ENCODE measurements at regions of chr17 and their contacts with region 1.

Region 1: GRCh38 chr17:45098869-45099616 is 33.3 kb downstream of the PLCD3 start:
- DNase-seq: peak; percentile 82 to 93 (median 84)
- ATAC-seq: peak; percentile 55 to 83 (median 75)
- H3K4me3 ChIP-seq: no peak overlapping the region
- H3K27ac ChIP-seq: peak overlapping the region in 5 of 12 donors; percentile 29 to 72 (median 42)
- H3K4me1 ChIP-seq: peaks cover 0 to 48% (median 19%) of the 10 kb centered on the region in 12 donors
- H3K27me3 ChIP-seq: no peaks in the 10 kb centered on the region
- CTCF ChIP-seq: peak; percentile 85 to 96 (median 90)
- POLR2A ChIP-seq: no peak

Region 2: GRCh38 chr17:44775136-44775837 is 323.8 kb before region 1 on chr17:
- intact Hi-C with region 1: loop called in 1 of 10 experiments (anchors 10 kb)
- DNase-seq: peak in 4 of 5 donors; percentile 96 to 98 (median 96)
- ATAC-seq: peak; percentile 93 to 94 (median 94)
- H3K4me3 ChIP-seq: peak overlapping the region; percentile 31 to 74 (median 63)
- H3K27ac ChIP-seq: peak overlapping the region in 6 of 12 donors; percentile 7 to 82 (median 36)
- H3K4me1 ChIP-seq: peaks cover 0 to 30% (median 21%) of the 10 kb centered on the region in 12 donors
- H3K27me3 ChIP-seq: no peaks in the 10 kb centered on the region
- CTCF ChIP-seq: peak in 3 of 12 donors; percentile 3 to 38 (median 7)
- POLR2A ChIP-seq: no peak

Region 3: DNA sequence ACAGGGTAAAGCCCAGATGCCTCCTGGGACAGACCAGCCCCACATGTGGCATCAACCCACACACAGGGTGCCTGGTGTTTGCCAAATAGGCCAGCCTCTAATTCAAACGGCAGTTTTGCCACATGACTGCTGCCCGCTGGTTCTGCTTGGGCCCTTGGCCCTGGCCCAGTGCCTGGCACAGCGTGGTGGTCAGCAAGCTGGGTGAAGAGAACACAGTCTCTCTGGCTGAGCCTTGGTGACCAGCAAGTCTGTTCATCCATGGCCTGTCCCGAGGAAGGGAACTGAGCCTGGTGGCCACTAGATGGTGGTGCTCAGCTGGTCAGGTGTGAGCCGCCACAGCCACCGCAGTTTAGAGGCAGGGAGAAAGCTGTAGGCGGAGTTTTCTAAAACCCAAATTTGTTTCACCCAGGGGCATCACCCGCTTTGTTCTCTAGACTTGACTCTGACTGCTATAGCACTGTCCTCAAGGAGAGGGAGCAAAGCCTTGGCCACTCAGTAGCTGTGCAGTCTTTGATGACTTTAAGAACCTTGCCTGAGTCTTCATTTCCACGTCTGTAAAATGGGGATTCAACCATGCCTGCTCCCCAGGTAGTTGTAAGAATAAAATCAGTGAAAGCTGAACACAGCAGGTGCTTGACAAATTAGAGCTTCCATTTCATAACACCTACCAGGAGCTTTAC is 179.0 kb before region 1 on chr17:
- intact Hi-C with region 1: loop called in 9 of 10 experiments (anchors 2 to 10 kb)
- DNase-seq: peak; percentile 79 to 88 (median 84)
- ATAC-seq: peak; percentile 69 to 85 (median 84)
- H3K4me3 ChIP-seq: no peak overlapping the region
- H3K27ac ChIP-seq: peak overlapping the region in 5 of 12 donors; percentile 17 to 74 (median 70)
- H3K4me1 ChIP-seq: peaks cover 0 to 38% (median 16%) of the 10 kb centered on the region in 12 donors
- H3K27me3 ChIP-seq: peaks cover 0 to 4% (median 0%) of the 10 kb centered on the region in 9 donors
- CTCF ChIP-seq: peak; percentile 70 to 90 (median 84)
- POLR2A ChIP-seq: no peak

Region 4: DNA sequence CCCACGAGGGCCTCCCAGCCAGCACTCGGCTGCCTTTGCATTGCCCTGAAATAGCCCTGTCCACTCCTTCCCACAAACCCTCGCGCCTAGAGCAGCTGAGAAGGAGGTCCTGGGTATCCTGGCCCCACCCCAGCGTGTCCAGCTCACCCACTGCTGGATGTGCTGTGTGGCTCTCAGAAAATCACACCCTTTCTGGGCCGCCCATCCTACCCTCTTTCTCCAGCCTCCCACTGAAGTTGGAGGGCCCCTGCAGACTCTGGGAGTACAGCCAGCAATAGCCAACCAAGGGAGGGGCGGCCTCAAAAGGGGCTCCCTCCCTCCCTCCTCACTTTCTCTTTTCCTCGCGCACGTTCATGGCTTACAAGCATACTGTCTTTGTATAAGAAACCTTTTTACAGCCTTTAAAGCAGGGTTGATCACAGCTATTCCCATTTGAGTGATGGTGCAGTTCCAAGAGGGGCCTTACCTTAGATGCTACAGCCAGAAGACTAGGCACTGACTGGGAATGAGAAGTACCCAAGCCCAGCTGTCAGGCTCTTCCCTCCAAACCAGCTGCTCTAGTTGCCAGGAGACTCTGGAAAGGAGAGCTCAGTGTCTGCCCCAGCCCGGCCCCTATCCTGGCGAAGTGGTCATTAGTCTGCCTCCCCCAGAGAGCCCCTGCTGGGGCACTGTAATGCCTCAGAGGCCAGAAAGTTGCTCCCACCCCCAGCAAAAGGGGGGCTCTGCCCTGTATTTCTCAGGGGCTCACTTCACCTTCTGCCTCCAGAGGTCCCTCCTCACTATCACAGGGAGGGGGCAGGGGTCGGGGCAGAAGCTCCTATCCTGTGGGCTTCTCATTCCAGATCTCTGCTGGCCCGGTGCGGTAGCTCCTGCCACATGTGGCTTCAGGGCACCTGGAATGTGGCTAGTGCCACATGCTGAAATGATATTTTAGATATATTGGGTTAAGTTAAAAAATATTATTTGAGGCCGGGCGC is 85.7 kb before region 1 on chr17:
- intact Hi-C with region 1: no loop called
- DNase-seq: peak in 2 of 5 donors; percentile 44 to 56
- ATAC-seq: peak; percentile 15 to 78 (median 64)
- H3K4me3 ChIP-seq: peak overlapping the region in 2 of 12 donors; percentile 3 to 19
- H3K27ac ChIP-seq: no peak overlapping the region
- H3K4me1 ChIP-seq: peaks cover 0 to 17% (median 9%) of the 10 kb centered on the region in 12 donors
- H3K27me3 ChIP-seq: peaks cover 0 to 3% (median 0%) of the 10 kb centered on the region in 9 donors
- CTCF ChIP-seq: no peak
- POLR2A ChIP-seq: no peak

Region 5: DNA sequence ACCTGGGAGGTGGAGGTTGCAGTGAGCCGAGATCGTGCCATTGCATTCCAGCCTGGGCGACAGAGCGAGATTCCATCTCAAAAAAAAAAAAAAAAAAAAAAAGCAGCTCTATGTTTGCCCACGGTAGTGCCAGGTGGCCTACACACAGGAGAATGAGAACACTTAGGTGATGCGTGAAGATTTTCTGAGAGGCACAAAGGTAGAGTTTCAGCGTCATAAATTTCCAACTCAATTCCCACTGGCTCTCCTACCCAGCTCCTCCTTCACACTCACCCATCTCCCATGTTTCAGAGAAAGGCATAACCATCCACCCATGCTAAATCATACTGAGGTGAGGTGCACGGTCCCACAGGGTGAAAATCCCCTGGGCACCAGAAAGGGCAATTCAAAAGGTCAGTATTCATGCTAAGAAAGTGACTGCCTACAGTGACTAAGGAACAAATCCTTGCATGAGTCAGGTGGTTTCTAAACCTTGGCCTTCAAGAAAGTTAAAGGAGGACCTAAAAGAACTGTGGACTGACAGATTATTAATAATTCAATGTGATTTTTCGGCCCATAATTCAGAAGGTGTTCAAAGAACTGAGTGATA is 52.4 kb before region 1 on chr17:
- intact Hi-C with region 1: no loop called
- DNase-seq: no peak
- ATAC-seq: no peak
- H3K4me3 ChIP-seq: no peak overlapping the region
- H3K27ac ChIP-seq: no peak overlapping the region
- H3K4me1 ChIP-seq: peaks cover 0 to 50% (median 22%) of the 10 kb centered on the region in 12 donors
- H3K27me3 ChIP-seq: no peaks in the 10 kb centered on the region
- CTCF ChIP-seq: no peak
- POLR2A ChIP-seq: no peak

Region 6: GRCh38 chr17:45060797-45061605 is 38.0 kb before region 1 on chr17 and contains the start of gene NMT1:
- intact Hi-C with region 1: loop called in 2 of 10 experiments (anchors 5 kb)
- DNase-seq: peak; percentile 97 to 99 (median 98)
- ATAC-seq: peak; percentile 98
- H3K4me3 ChIP-seq: peak within 1 kb of the TSS; percentile 41 to 94 (median 78)
- H3K27ac ChIP-seq: peak within 1 kb of the TSS; percentile 68 to 95 (median 91)
- H3K4me1 ChIP-seq: peaks cover 2 to 60% (median 41%) of the 10 kb centered on the region in 12 donors
- H3K27me3 ChIP-seq: no peaks in the 10 kb centered on the region
- CTCF ChIP-seq: peak in 2 of 12 donors; percentile 15 to 24
- POLR2A ChIP-seq: peak; percentile 17 to 83
- total RNA-seq, gene NMT1: 61.0 to 114 (median 70.8) TPM